ENCODE measurements at regions of chr1 and their contacts with region 1.

Region 1: GRCh38 chr1:169809370-169810095 is 14.8 kb upstream of the METTL18 start:
- DNase-seq: peak in 4 of 5 donors; percentile 31 to 37 (median 34)
- H3K4me3 ChIP-seq: no peak overlapping the region
- H3K4me3 Mint-ChIP-seq: no peak overlapping the region
- H3K27ac ChIP-seq: no peak overlapping the region
- H3K27ac Mint-ChIP-seq: peak overlapping the region in 1 of 7 donors; percentile 38
- H3K4me1 ChIP-seq: no peaks in the 10 kb centered on the region
- H3K4me1 Mint-ChIP-seq: peaks cover 0 to 1% (median 0%) of the 10 kb centered on the region in 4 donors
- H3K27me3 ChIP-seq: no peaks in the 10 kb centered on the region
- H3K27me3 Mint-ChIP-seq: no peaks in the 10 kb centered on the region

Region 2: DNA sequence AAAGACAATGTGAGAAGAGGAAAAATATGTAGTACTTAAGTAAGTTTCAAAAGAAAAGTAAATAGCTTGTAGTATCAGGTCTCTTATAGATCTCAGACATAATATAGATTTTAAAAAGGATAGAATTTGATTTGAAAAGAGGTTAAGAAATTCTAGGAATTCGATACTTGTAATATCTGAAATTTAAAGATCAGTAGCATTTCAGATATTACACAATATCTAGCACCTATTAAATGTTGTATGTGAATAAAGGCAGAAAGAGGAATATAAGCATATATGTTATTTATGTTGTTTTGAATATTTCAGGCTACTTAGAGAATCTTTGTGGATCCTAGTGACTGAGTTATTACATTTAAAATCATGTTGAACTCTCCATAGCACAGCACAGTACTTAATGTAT is 20.1 kb after region 1 on chr1:
- CTCF ChIA-PET with region 1: interaction called, 14 read pairs
- POLR2A ChIA-PET with region 1: no interaction called
- intact Hi-C with region 1: no loop called
- DNase-seq: no peak
- H3K4me3 ChIP-seq: no peak overlapping the region
- H3K4me3 Mint-ChIP-seq: no peak overlapping the region
- H3K27ac ChIP-seq: no peak overlapping the region
- H3K27ac Mint-ChIP-seq: peak overlapping the region in 2 of 7 donors; percentile 12 to 75
- H3K4me1 ChIP-seq: no peaks in the 10 kb centered on the region
- H3K4me1 Mint-ChIP-seq: no peaks in the 10 kb centered on the region
- H3K27me3 ChIP-seq: no peaks in the 10 kb centered on the region
- H3K27me3 Mint-ChIP-seq: no peaks in the 10 kb centered on the region

Region 3: GRCh38 chr1:169874229-169874628 is 64.7 kb after region 1 on chr1:
- CTCF ChIA-PET with region 1: no interaction called
- POLR2A ChIA-PET with region 1: no interaction called
- intact Hi-C with region 1: no loop called
- DNase-seq: no peak
- H3K4me3 ChIP-seq: no peak overlapping the region
- H3K4me3 Mint-ChIP-seq: no peak overlapping the region
- H3K27ac ChIP-seq: no peak overlapping the region
- H3K27ac Mint-ChIP-seq: peak overlapping the region in 6 of 7 donors; percentile 35 to 80 (median 55)
- H3K4me1 ChIP-seq: no peaks in the 10 kb centered on the region
- H3K4me1 Mint-ChIP-seq: peaks cover 21 to 28% (median 24%) of the 10 kb centered on the region in 4 donors
- H3K27me3 ChIP-seq: no peaks in the 10 kb centered on the region
- H3K27me3 Mint-ChIP-seq: no peaks in the 10 kb centered on the region